WTC11 (cell line): ENCODE measurements at regions of chr4 and their contacts with region 1.

Region 1: GRCh38 chr4:73864365-73864764 is 4.8 kb upstream of the CXCL1 start:
- DNase-seq: peak; percentile 23
- ATAC-seq: peak; percentile 60
- H3K4me3 Mint-ChIP-seq: no peak overlapping the region
- H3K27ac Mint-ChIP-seq: no peak overlapping the region
- H3K4me1 Mint-ChIP-seq: peaks cover 14% of the 10 kb centered on the region
- H3K27me3 Mint-ChIP-seq: peaks cover 16% of the 10 kb centered on the region
- CTCF ChIP-seq: no peak

Region 2: GRCh38 chr4:73836373-73837279 is 27.7 kb before region 1 on chr4 and contains the start of gene CXCL6:
- CTCF ChIA-PET with region 1: interaction called, 22 read pairs
- POLR2A ChIA-PET with region 1: interaction called, 3 read pairs
- DNase-seq: peak; percentile 67
- ATAC-seq: peak; percentile 86
- H3K4me3 Mint-ChIP-seq: peak within 1 kb of the TSS; percentile 89
- H3K27ac Mint-ChIP-seq: no peak within 1 kb of the TSS
- H3K4me1 Mint-ChIP-seq: peaks cover 9% of the 10 kb centered on the region
- H3K27me3 Mint-ChIP-seq: peaks cover 37% of the 10 kb centered on the region
- CTCF ChIP-seq: no peak
- total RNA-seq, gene CXCL6: 3.8 to 4.9 TPM (median 4.4 TPM) in 3 replicates

Region 3: DNA sequence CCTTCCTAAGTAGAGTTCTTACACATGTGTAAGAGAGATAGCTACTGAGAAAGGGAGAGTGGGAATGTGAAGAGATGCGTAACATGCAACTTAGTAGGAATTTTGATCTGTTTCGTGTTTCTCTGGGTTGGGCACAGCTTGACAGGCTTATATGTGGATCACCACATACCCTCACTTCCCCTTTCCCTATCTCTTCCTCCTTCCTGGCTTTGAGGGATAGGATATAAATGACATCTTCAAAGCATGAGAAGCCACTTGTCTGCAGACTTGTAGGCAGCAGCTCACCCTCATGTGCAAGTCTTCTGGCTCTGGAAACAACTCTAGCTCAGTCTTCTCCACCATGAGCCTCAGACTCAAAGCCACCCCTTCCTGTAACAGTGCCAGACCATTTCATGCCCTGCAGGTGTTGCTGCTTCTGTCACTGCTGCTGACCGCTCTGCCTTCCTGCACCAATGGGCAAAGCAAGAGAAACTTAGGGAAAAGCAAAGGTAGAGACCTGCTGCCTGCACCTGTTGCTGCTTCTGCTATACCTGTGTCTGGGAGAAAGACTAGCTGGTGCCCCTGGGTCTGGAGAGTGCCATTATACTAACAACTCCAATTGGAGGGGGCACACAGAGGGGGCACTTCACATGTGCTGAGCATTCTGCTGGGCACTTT is 16.7 kb before region 1 on chr4:
- CTCF ChIA-PET with region 1: interaction called, 39 read pairs
- POLR2A ChIA-PET with region 1: no interaction called
- DNase-seq: no peak
- ATAC-seq: no peak
- H3K4me3 Mint-ChIP-seq: no peak overlapping the region
- H3K27ac Mint-ChIP-seq: no peak overlapping the region
- H3K4me1 Mint-ChIP-seq: peaks cover 24% of the 10 kb centered on the region
- H3K27me3 Mint-ChIP-seq: peaks cover 4% of the 10 kb centered on the region
- CTCF ChIP-seq: no peak

Region 4: GRCh38 chr4:73853246-73853704 is 11.1 kb before region 1 on chr4 and contains the start of gene PF4V1:
- CTCF ChIA-PET with region 1: interaction called, 39 read pairs
- POLR2A ChIA-PET with region 1: no interaction called
- DNase-seq: peak; percentile 71
- ATAC-seq: peak; percentile 93
- H3K4me3 Mint-ChIP-seq: peak within 1 kb of the TSS; percentile 52
- H3K27ac Mint-ChIP-seq: no peak within 1 kb of the TSS
- H3K4me1 Mint-ChIP-seq: peaks cover 20% of the 10 kb centered on the region
- H3K27me3 Mint-ChIP-seq: peaks cover 18% of the 10 kb centered on the region
- CTCF ChIP-seq: no peak
- total RNA-seq, gene PF4V1: not detected in 3 replicates